H1 (cell line): ENCODE measurements at regions of chr3 and their contacts with region 1.

Region 1: GRCh38 chr3:67624078-67624477 is 30.3 kb downstream of the SUCLG2 start:
- DNase-seq: no peak
- H3K4me3 ChIP-seq: no peak overlapping the region
- H3K27ac ChIP-seq: no peak overlapping the region
- H3K4me1 ChIP-seq: peaks cover under 1 to 7% (median 4%) of the 10 kb centered on the region in 4 experiments; a peak in 5 of 7 replicates
- H3K27me3 ChIP-seq: no peaks in the 10 kb centered on the region
- CTCF ChIP-seq: no peak
- EP300 ChIP-seq: no peak
- POLR2A ChIP-seq: no peak
- RAD21 ChIP-seq: no peak

Region 2: GRCh38 chr3:67154429-67154828 is 469.6 kb before region 1 on chr3:
- CTCF ChIA-PET with region 1: no interaction called
- POLR2A ChIA-PET with region 1: no interaction called
- DNase-seq: peak; percentile 9 to 49
- H3K4me3 ChIP-seq: no peak overlapping the region
- H3K27ac ChIP-seq: no peak overlapping the region
- H3K4me1 ChIP-seq: peaks cover 0 to 5% (median 0%) of the 10 kb centered on the region in 4 experiments; a peak in 2 of 7 replicates
- H3K27me3 ChIP-seq: no peaks in the 10 kb centered on the region
- CTCF ChIP-seq: no peak
- EP300 ChIP-seq: no peak
- POLR2A ChIP-seq: no peak
- RAD21 ChIP-seq: no peak

Region 3: GRCh38 chr3:67578416-67578815 is 45.7 kb before region 1 on chr3:
- CTCF ChIA-PET with region 1: no interaction called
- POLR2A ChIA-PET with region 1: no interaction called
- DNase-seq: no peak
- H3K4me3 ChIP-seq: no peak overlapping the region
- H3K27ac ChIP-seq: no peak overlapping the region
- H3K4me1 ChIP-seq: no peaks in the 10 kb centered on the region; a peak in 1 of 7 replicates
- H3K27me3 ChIP-seq: no peaks in the 10 kb centered on the region
- CTCF ChIP-seq: no peak
- EP300 ChIP-seq: no peak
- POLR2A ChIP-seq: no peak
- RAD21 ChIP-seq: no peak

Region 4: GRCh38 chr3:67654099-67654843 is 30.2 kb after region 1 on chr3 and contains the start of gene SUCLG2:
- CTCF ChIA-PET with region 1: no interaction called
- POLR2A ChIA-PET with region 1: interaction called, 10 read pairs
- DNase-seq: peak; percentile 70 to 87
- H3K4me3 ChIP-seq: peak within 1 kb of the TSS; percentile 50 to 74 (median 64)
- H3K27ac ChIP-seq: peak within 1 kb of the TSS; percentile 84
- H3K4me1 ChIP-seq: peaks cover 3 to 10% (median 6%) of the 10 kb centered on the region in 4 experiments
- H3K27me3 ChIP-seq: no peaks in the 10 kb centered on the region
- CTCF ChIP-seq: no peak
- EP300 ChIP-seq: no peak
- POLR2A ChIP-seq: peak; percentile 73 to 91
- RAD21 ChIP-seq: 0 out of 4 replicates have a peak, but pooled peaks of 1 of the 2 experiments have one; percentile 1
- total RNA-seq, gene SUCLG2: 42.9 and 46.2 TPM in 2 replicates